ENCODE measurements at regions of chr16 and their contacts with region 1.

Region 1: DNA sequence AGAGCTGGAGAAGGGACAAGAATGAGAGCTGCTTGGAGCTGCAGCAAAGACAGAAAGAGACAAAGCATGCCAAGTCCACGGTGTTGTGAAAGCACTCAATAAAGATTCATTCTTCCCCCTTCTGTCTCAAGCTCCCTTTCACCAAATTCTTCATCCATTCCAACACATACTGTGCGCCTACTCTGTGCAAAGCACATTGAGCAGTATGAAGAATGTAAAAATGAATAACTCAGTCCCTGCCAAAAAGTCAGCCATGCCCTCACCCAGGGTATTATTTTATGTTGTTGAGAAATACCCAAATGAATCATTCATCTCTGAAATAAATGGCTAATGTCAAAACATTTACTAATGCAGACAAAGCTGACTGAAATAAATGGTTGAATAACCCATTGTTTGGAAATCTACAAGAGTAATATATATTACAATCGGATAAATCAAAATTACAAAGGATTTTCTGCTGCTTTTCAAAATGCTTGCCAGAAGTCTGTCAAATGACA is 282.9 kb upstream of the IRX5 start:
- DNase-seq: peak; percentile 91
- H3K4me3 Mint-ChIP-seq: peak overlapping the region; percentile 67
- H3K27ac Mint-ChIP-seq: peak overlapping the region; percentile 94
- H3K4me1 Mint-ChIP-seq: peaks cover 42% of the 10 kb centered on the region
- H3K27me3 Mint-ChIP-seq: no peaks in the 10 kb centered on the region
- CTCF ChIP-seq: no peak

Region 2: GRCh38 chr16:54341892-54342776 is 305.6 kb before region 1 on chr16:
- CTCF ChIA-PET with region 1: no interaction called
- POLR2A ChIA-PET with region 1: interaction called, 14 read pairs
- intact Hi-C with region 1: no loop called
- DNase-seq: peak; percentile 87
- H3K4me3 Mint-ChIP-seq: peak overlapping the region; percentile 40
- H3K27ac Mint-ChIP-seq: peak overlapping the region; percentile 83
- H3K4me1 Mint-ChIP-seq: peaks cover 26% of the 10 kb centered on the region
- H3K27me3 Mint-ChIP-seq: no peaks in the 10 kb centered on the region
- CTCF ChIP-seq: no peak

Region 3: DNA sequence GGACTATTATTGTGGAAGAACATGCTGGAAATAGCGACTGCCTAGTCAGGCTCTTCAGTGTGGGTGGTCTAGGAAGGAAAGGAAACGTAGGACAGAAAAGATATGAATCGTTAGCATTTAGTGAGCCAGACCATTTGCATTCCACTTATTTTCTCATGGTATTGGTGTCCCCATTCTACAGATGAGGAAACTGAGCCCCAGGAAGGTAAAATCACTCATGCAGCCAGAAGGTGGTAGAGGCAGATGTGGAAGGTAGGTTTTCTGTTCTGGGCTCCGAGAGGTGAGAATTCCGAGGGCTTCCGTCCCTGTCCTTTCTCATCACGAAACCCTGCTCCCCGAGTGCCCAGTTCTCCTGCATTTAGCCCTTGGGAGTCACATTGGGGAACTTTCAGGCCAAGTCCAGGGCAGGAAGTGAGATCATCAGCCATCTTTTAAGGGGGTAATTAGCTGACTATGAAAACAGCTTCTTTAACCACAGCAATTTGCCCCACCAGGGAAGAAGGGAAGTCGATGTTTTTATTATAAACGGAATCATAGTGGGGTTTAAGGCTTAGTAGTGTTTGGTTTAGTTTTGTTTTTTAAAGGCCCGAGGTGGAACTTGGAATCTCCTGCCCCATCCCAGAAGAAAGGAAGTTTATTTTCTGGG is 250.5 kb before region 1 on chr16:
- CTCF ChIA-PET with region 1: no interaction called
- POLR2A ChIA-PET with region 1: no interaction called
- intact Hi-C with region 1: no loop called
- DNase-seq: no peak
- H3K4me3 Mint-ChIP-seq: no peak overlapping the region
- H3K27ac Mint-ChIP-seq: no peak overlapping the region
- H3K4me1 Mint-ChIP-seq: no peaks in the 10 kb centered on the region
- H3K27me3 Mint-ChIP-seq: no peaks in the 10 kb centered on the region
- CTCF ChIP-seq: no peak

Region 4: GRCh38 chr16:54425681-54426552 is 221.9 kb before region 1 on chr16:
- CTCF ChIA-PET with region 1: interaction called, 6 read pairs
- POLR2A ChIA-PET with region 1: interaction called, 19 read pairs
- intact Hi-C with region 1: no loop called
- DNase-seq: no peak
- H3K4me3 Mint-ChIP-seq: peak overlapping the region; percentile 7
- H3K27ac Mint-ChIP-seq: no peak overlapping the region
- H3K4me1 Mint-ChIP-seq: peaks cover 45% of the 10 kb centered on the region
- H3K27me3 Mint-ChIP-seq: no peaks in the 10 kb centered on the region
- CTCF ChIP-seq: no peak

Region 5: GRCh38 chr16:54447591-54448440 is 200.0 kb before region 1 on chr16:
- CTCF ChIA-PET with region 1: interaction called, 3 read pairs
- POLR2A ChIA-PET with region 1: interaction called, 39 read pairs
- intact Hi-C with region 1: no loop called
- DNase-seq: peak; percentile 93
- H3K4me3 Mint-ChIP-seq: no peak overlapping the region
- H3K27ac Mint-ChIP-seq: no peak overlapping the region
- H3K4me1 Mint-ChIP-seq: peaks cover 32% of the 10 kb centered on the region
- H3K27me3 Mint-ChIP-seq: no peaks in the 10 kb centered on the region
- CTCF ChIP-seq: no peak

Region 6: DNA sequence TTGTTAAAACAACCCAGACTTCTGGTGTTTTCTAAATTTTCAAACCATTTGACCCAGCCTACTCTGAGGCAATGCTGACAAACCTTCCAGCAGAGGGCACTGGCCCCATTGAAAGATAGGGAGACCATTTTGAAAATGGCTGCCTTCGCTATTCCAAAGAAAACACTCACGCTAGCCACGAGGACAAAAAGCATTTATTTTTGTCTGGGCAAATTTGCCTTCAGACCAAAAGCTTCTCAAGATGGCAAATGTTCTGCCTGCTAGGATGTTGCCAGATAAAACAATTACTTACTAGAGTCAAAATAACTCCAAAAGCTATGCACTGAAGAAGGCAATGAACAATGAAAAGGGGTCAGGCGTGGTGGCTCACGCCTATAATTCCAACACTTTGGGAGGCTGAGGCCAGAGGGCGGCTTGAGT is 13.8 kb before region 1 on chr16:
- CTCF ChIA-PET with region 1: interaction called, 26 read pairs
- POLR2A ChIA-PET with region 1: interaction called, 22 read pairs
- intact Hi-C with region 1: no loop called
- DNase-seq: peak; percentile 78
- H3K4me3 Mint-ChIP-seq: no peak overlapping the region
- H3K27ac Mint-ChIP-seq: no peak overlapping the region
- H3K4me1 Mint-ChIP-seq: peaks cover 8% of the 10 kb centered on the region
- H3K27me3 Mint-ChIP-seq: no peaks in the 10 kb centered on the region
- CTCF ChIP-seq: peak; percentile 76

Region 7: GRCh38 chr16:54846766-54847165 is 199.0 kb after region 1 on chr16:
- CTCF ChIA-PET with region 1: no interaction called
- POLR2A ChIA-PET with region 1: interaction called, 13 read pairs
- intact Hi-C with region 1: no loop called
- DNase-seq: peak; percentile 81
- H3K4me3 Mint-ChIP-seq: peak overlapping the region; percentile 51
- H3K27ac Mint-ChIP-seq: peak overlapping the region; percentile 94
- H3K4me1 Mint-ChIP-seq: peaks cover 22% of the 10 kb centered on the region
- H3K27me3 Mint-ChIP-seq: no peaks in the 10 kb centered on the region
- CTCF ChIP-seq: no peak

Region 8: DNA sequence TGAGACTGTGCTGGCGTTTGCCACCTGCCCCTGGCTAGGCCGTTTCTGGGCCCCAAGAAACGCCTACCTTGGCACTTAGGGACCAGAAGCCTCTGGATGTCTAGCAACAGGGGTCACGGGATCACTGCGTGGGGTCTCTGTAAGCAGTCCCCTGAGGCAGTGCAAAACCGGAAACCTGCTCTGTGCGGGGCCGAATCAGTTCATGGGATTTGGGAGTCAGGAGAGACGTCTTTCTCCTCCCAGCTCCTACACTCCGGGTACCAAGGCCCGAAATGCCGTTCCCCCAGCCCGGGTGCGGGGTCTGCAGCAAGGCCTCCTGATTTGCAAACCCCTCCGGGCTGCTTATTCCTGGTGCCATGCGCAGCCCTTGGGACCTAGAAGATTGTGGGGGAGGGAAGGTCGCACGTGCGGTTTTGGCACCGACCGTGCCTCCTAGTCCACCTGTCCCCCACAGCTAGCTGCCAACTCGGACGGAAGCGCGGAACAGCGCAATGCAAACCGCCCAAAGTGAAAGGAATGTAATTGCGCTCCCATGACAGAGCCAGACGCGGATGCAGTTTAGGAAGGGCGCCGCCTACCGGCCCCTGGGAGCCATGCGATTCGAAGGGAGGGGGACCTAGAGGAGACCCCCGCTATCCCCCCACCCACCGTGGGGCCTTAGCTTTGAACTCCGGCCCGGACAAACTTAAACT is 289.4 kb after region 1 on chr16:
- CTCF ChIA-PET with region 1: interaction called, 3 read pairs
- POLR2A ChIA-PET with region 1: interaction called, 190 read pairs
- intact Hi-C with region 1: loop called (anchors 5 kb)
- DNase-seq: peak; percentile 77
- H3K4me3 Mint-ChIP-seq: peak overlapping the region; percentile 88
- H3K27ac Mint-ChIP-seq: peak overlapping the region; percentile 97
- H3K4me1 Mint-ChIP-seq: peaks cover 10% of the 10 kb centered on the region
- H3K27me3 Mint-ChIP-seq: no peaks in the 10 kb centered on the region
- CTCF ChIP-seq: peak; percentile 80

Measured in MCF 10A (cell line).